CD4-positive, alpha-beta T cell (primary cell): ENCODE measurements at regions of chr4 and their contacts with region 1.

Region 1: GRCh38 chr4:86934771-86935565 is at the start of gene AFF1:
- DNase-seq: peak; percentile 73 to 98 (median 82)
- ATAC-seq: peak; percentile 65
- H3K4me3 ChIP-seq: peak within 1 kb of the TSS; percentile 93
- H3K4me3 Mint-ChIP-seq: peak within 1 kb of the TSS; percentile 96
- H3K27ac ChIP-seq: peak within 1 kb of the TSS; percentile 81
- H3K27ac Mint-ChIP-seq: peak within 1 kb of the TSS; percentile 94
- H3K4me1 ChIP-seq: peaks cover 30% of the 10 kb centered on the region
- H3K4me1 Mint-ChIP-seq: peaks cover 52% of the 10 kb centered on the region
- H3K27me3 ChIP-seq: no peaks in the 10 kb centered on the region
- H3K27me3 Mint-ChIP-seq: no peaks in the 10 kb centered on the region
- CTCF ChIP-seq: peak; percentile 47
- total RNA-seq, gene AFF1: 50.3 to 51.2 TPM

Region 2: DNA sequence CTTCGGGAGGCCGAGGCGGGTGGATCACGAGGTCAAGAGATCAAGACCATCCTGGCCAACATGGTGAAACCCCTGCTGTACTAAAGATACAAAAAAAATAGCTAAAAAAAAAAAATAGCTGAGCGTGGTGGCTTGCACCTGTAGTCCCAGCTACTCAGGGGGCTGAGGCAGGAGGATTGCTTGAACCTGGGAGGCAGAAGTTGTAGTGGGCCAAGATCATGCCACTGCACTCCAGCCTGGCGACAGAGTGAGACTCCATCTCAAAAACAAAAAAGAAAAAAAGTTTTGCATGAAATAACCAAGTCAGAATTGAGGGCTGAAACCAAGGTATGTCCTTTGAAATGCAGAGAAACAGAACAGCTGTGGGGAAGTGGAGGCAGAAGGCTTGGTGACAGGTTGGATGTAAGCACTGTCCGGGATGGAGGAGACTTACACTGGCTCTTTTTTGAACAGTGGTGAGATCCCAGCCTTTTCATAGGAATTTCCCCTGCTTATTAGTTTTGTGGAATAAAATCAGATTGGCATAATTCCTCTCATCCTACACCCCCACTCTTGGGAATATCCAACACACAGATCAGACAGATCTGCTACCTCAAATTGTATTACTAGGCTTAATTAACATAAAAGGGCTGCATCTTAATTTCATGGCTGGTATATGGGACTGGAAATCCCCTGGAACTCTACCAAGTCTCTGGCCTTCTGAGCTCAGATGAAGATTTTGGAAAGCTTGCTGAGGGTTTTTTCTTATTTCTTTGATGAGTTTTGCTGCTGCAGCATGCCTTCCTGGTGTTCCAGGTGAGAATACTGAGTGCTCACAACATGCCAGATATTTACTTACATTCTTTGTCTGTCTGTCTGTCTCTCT is 23.9 kb before region 1 on chr4:
- CTCF ChIA-PET with region 1: no interaction called
- POLR2A ChIA-PET with region 1: no interaction called
- intact Hi-C with region 1: no loop called
- DNase-seq: peak in 2 of 14 experiments; percentile 26 to 29
- ATAC-seq: no peak
- H3K4me3 ChIP-seq: no peak overlapping the region
- H3K4me3 Mint-ChIP-seq: no peak overlapping the region
- H3K27ac ChIP-seq: no peak overlapping the region
- H3K27ac Mint-ChIP-seq: no peak overlapping the region
- H3K4me1 ChIP-seq: peaks cover 5% of the 10 kb centered on the region
- H3K4me1 Mint-ChIP-seq: peaks cover 24% of the 10 kb centered on the region
- H3K27me3 ChIP-seq: no peaks in the 10 kb centered on the region
- H3K27me3 Mint-ChIP-seq: no peaks in the 10 kb centered on the region
- CTCF ChIP-seq: no peak

Region 3: DNA sequence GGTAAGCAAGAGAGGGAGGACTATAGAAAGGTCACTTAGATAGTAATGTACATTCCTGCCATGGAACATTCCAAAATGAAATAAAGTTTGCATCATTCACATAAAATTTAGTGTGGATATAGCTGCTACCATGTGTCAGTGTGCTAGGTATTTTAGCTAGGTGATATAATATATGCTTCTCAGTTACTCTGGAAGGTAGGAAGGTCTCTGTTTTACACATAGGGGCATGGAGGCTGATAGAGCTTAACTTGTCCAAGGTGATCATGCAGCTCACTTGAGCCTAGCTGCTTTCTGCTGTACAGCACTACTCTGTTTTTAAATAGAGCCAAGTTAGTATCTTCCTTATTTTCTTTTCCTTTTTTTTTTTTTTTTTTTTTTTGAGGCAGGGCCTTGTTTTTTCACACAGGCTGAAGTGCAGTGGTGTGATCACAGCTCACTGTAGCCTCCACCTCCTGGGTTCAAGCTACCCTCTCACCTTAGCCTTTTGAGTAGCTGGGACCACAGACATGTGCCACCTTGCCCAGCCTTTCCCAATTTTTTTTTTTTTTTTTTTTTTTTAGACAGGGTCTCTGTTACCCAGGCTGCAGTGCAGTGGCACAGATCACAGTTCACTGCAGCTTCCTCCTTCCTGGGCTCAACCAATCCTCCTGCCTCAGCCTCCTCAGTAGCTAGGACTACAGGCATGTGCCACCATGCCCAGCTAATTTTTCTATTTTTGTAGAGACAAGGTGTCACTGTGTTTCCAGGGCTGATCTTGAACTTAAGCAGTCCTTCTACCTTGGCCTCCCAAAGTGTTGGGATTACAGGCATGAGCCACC is 10.2 kb after region 1 on chr4:
- CTCF ChIA-PET with region 1: no interaction called
- POLR2A ChIA-PET with region 1: interaction called, 10 read pairs
- intact Hi-C with region 1: no loop called
- DNase-seq: no peak
- ATAC-seq: no peak
- H3K4me3 ChIP-seq: no peak overlapping the region
- H3K4me3 Mint-ChIP-seq: no peak overlapping the region
- H3K27ac ChIP-seq: no peak overlapping the region
- H3K27ac Mint-ChIP-seq: no peak overlapping the region
- H3K4me1 ChIP-seq: peaks cover 26% of the 10 kb centered on the region
- H3K4me1 Mint-ChIP-seq: peaks cover 49% of the 10 kb centered on the region
- H3K27me3 ChIP-seq: no peaks in the 10 kb centered on the region
- H3K27me3 Mint-ChIP-seq: no peaks in the 10 kb centered on the region
- CTCF ChIP-seq: no peak

Region 4: GRCh38 chr4:86972997-86973396 is 38.0 kb after region 1 on chr4:
- CTCF ChIA-PET with region 1: interaction called, 4 read pairs
- POLR2A ChIA-PET with region 1: interaction called, 4 read pairs
- intact Hi-C with region 1: loop called in 1 of 2 experiments (anchors 5 kb)
- DNase-seq: no peak
- ATAC-seq: no peak
- H3K4me3 ChIP-seq: no peak overlapping the region
- H3K4me3 Mint-ChIP-seq: no peak overlapping the region
- H3K27ac ChIP-seq: no peak overlapping the region
- H3K27ac Mint-ChIP-seq: peak overlapping the region; percentile 54
- H3K4me1 ChIP-seq: peaks cover 15% of the 10 kb centered on the region
- H3K4me1 Mint-ChIP-seq: peaks cover 67% of the 10 kb centered on the region
- H3K27me3 ChIP-seq: no peaks in the 10 kb centered on the region
- H3K27me3 Mint-ChIP-seq: no peaks in the 10 kb centered on the region
- CTCF ChIP-seq: no peak

Region 5: DNA sequence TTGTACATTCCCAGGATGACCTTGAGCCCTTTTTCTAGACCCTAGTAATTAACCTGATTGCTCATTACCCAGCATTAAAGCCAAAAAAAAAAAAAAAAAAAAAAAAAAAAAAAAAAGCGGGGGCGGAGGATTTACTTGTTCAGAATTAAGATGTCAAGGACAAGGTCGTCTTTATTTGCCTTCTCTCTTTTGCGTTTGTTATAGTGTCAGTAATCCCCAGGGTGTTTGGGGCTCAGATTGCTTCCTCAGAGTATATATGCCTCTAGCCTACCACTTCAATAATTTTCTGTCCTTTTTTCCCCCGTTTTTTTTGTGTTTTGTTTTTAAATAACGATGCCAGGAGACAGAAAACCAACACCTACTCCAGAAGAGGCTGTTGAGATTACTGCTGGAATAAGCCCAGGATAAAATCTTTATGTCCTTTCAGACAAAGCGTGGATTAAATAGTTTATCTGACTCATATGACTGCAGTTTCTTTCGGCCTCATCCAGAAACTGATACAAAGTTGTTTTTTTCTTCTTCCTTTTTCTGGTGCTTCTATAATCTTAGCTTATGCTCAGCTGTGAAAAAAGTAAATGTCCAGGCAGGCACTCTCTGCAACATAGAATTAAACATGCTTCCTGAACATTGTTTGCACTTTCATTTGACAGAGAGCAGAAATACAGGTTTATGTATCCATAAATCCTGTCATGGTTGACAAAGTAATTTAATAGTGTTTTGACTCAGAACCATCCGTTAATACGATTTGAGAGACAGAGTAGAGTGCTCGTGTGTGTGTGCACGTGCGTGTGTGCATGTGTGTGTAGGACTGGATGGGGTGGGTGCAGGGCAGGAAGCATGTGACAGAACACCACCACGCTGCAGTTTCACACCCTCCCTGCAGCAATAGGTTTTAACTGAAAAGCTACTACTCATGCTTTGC is 138.5 kb after region 1 on chr4:
- CTCF ChIA-PET with region 1: no interaction called
- POLR2A ChIA-PET with region 1: interaction called, 15 read pairs
- intact Hi-C with region 1: no loop called
- DNase-seq: peak; percentile 16 to 71 (median 42)
- ATAC-seq: peak; percentile 94
- H3K4me3 ChIP-seq: peak overlapping the region; percentile 23
- H3K4me3 Mint-ChIP-seq: peak overlapping the region; percentile 63
- H3K27ac ChIP-seq: peak overlapping the region in 1 of 2 donors; percentile 2
- H3K27ac Mint-ChIP-seq: peak overlapping the region; percentile 11
- H3K4me1 ChIP-seq: peaks cover 6% of the 10 kb centered on the region
- H3K4me1 Mint-ChIP-seq: peaks cover 70% of the 10 kb centered on the region
- H3K27me3 ChIP-seq: no peaks in the 10 kb centered on the region
- H3K27me3 Mint-ChIP-seq: no peaks in the 10 kb centered on the region
- CTCF ChIP-seq: no peak

Region 6: GRCh38 chr4:87103691-87104187 is 168.8 kb after region 1 on chr4:
- CTCF ChIA-PET with region 1: interaction called, 4 read pairs
- POLR2A ChIA-PET with region 1: interaction called, 31 read pairs
- intact Hi-C with region 1: loop called in 1 of 2 experiments (anchors 2 kb)
- DNase-seq: peak in 4 of 14 experiments; percentile 8 to 75 (median 70)
- ATAC-seq: peak; percentile 77
- H3K4me3 ChIP-seq: no peak overlapping the region
- H3K4me3 Mint-ChIP-seq: peak overlapping the region; percentile 78
- H3K27ac ChIP-seq: peak overlapping the region; percentile 78 to 88
- H3K27ac Mint-ChIP-seq: peak overlapping the region; percentile 93
- H3K4me1 ChIP-seq: peaks cover 16% of the 10 kb centered on the region
- H3K4me1 Mint-ChIP-seq: peaks cover 67% of the 10 kb centered on the region
- H3K27me3 ChIP-seq: no peaks in the 10 kb centered on the region
- H3K27me3 Mint-ChIP-seq: no peaks in the 10 kb centered on the region
- CTCF ChIP-seq: no peak

Region 7: GRCh38 chr4:87390891-87391575 is 456.1 kb after region 1 on chr4 and contains the start of gene HSD17B11:
- CTCF ChIA-PET with region 1: no interaction called
- POLR2A ChIA-PET with region 1: interaction called, 5 read pairs
- intact Hi-C with region 1: loop called in 1 of 2 experiments (anchors 10 kb)
- DNase-seq: peak; percentile 62 to 93 (median 74)
- ATAC-seq: peak; percentile 97
- H3K4me3 ChIP-seq: peak within 1 kb of the TSS; percentile 90
- H3K4me3 Mint-ChIP-seq: peak within 1 kb of the TSS; percentile 97
- H3K27ac ChIP-seq: peak within 1 kb of the TSS; percentile 72 to 81
- H3K27ac Mint-ChIP-seq: peak within 1 kb of the TSS; percentile 82
- H3K4me1 ChIP-seq: peaks cover 31% of the 10 kb centered on the region
- H3K4me1 Mint-ChIP-seq: peaks cover 51% of the 10 kb centered on the region
- H3K27me3 ChIP-seq: no peaks in the 10 kb centered on the region
- H3K27me3 Mint-ChIP-seq: no peaks in the 10 kb centered on the region
- CTCF ChIP-seq: no peak
- total RNA-seq, gene HSD17B11: 34.9 to 36.5 TPM

Region 8: DNA sequence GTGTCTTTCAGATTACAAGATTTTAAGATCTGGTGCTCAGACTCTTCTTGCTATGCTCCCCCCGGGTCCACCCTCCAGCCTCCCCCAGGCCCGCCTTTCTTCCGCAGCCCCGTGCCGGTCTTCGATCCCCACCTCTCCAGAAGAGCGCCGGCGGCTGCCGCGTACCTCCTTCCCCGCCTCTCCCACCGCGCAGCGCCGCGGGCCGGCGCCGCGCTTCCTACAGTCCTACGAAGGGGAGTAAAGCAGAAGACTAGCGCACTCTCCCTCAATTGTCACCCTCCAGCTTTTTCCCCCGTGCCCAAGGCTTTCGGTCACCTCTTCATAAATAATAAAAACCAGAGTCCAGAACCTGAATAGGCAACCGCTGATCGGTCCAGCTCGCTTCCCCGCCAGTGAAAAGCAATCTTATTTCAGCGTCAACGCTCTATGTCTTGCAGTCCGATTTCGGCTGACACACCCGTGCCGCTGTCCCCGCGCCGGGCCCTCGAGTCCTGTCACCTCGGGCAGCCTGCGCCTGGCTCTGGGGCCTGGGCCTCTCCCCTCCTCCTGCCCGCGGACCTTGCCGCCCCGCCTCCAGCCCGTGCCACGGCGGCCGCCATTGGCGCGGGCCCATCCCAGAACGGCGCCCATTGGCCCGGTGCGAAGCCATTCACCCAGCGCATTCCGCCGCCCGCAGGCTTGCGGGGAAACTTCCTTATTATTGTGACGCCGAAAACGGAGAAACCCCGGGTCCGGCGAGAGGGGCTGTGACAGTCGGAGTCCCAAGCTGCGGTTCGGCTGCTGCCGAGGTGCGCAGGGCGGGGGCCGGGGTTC is 1657.0 kb after region 1 on chr4 and contains the start of gene HERC3:
- CTCF ChIA-PET with region 1: no interaction called
- POLR2A ChIA-PET with region 1: no interaction called
- intact Hi-C with region 1: loop called in 1 of 2 experiments (anchors 10 kb)
- DNase-seq: peak; percentile 76 to 95 (median 86)
- ATAC-seq: peak; percentile 84
- H3K4me3 ChIP-seq: peak within 1 kb of the TSS; percentile 96
- H3K4me3 Mint-ChIP-seq: peak within 1 kb of the TSS; percentile 100
- H3K27ac ChIP-seq: peak within 1 kb of the TSS; percentile 83 to 93
- H3K27ac Mint-ChIP-seq: peak within 1 kb of the TSS; percentile 99
- H3K4me1 ChIP-seq: peaks cover 23% of the 10 kb centered on the region
- H3K4me1 Mint-ChIP-seq: peaks cover 60% of the 10 kb centered on the region
- H3K27me3 ChIP-seq: no peaks in the 10 kb centered on the region
- H3K27me3 Mint-ChIP-seq: no peaks in the 10 kb centered on the region
- CTCF ChIP-seq: no peak
- total RNA-seq, gene HERC3: 63.1 to 66.4 TPM